Activated CD4-positive, alpha-beta T cell treated with anti-CD3 and anti-CD28 coated beads, Interleukin-2, amount 10 ng/mL, durations not matched to agents 24 days and 14 days (primary cell): ENCODE measurements at regions of chr1 and their contacts with region 1.

Region 1: DNA sequence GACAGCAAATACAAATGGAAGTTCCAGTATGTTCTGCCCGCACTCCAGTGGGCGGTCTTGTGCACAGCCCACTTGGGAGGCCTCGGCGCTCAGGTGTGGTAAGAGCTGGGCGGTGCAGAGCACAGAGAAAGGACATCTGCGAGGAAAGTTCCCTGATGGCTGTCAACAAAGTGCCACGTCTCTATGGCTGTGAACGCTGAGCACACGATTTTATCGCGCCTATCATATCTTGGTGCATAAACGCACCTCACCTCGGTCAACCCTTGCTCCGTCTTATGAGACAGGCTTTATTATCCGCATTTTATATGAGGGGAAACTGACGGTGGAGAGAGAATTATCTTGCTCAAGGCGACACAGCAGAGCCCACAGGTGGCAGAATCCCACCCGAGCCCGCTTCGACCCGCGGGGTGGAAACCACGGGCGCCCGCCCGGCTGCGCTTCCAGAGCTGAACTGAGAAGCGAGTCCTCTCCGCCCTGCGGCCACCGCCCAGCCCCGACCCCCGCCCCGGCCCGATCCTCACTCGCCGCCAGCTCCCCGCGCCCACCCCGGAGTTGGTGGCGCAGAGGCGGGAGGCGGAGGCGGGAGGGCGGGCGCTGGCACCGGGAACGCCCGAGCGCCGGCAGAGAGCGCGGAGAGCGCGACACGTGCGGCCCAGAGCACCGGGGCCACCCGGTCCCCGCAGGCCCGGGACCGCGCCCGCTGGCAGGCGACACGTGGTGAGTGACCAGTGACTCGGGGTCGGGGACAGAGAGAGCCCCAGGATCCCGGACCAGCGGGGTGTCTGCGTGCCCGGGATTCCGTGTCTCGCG is at the start of gene IL12RB2:
- DNase-seq: peak; percentile 93
- H3K4me3 Mint-ChIP-seq: peak within 1 kb of the TSS; percentile 97
- H3K27ac Mint-ChIP-seq: peak within 1 kb of the TSS; percentile 100
- H3K4me1 Mint-ChIP-seq: peaks cover 64% of the 10 kb centered on the region
- H3K27me3 Mint-ChIP-seq: no peaks in the 10 kb centered on the region
- total RNA-seq, gene IL12RB2: 138 and 146 TPM in 2 replicates

Region 2: GRCh38 chr1:65756616-65757015 is 1550.8 kb before region 1 on chr1:
- intact Hi-C with region 1: no loop called
- DNase-seq: no peak
- H3K4me3 Mint-ChIP-seq: no peak overlapping the region
- H3K27ac Mint-ChIP-seq: no peak overlapping the region
- H3K4me1 Mint-ChIP-seq: no peaks in the 10 kb centered on the region
- H3K27me3 Mint-ChIP-seq: peaks cover 19% of the 10 kb centered on the region

Region 3: DNA sequence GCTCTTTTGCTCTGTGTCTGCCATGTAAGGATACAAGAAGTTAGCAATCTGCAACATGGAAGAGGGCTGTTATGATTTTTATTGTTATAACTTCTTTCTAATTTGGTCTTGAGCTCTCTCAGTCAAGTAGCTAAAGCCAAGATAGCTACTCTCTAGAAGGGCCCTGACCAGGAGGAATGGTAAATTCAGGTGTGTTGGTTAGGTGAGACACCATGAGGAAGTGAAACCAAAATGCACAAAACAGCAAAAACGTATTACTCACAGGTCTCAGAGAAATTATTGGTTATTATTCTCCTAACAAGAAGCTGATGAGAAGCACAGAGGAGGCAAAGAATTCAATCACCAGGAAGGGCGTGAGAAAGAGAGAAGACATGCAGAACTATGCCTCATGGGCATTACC is 454.6 kb before region 1 on chr1:
- intact Hi-C with region 1: no loop called
- DNase-seq: no peak
- H3K4me3 Mint-ChIP-seq: no peak overlapping the region
- H3K27ac Mint-ChIP-seq: no peak overlapping the region
- H3K4me1 Mint-ChIP-seq: no peaks in the 10 kb centered on the region
- H3K27me3 Mint-ChIP-seq: no peaks in the 10 kb centered on the region

Region 4: GRCh38 chr1:67194209-67194863 is 113.1 kb before region 1 on chr1:
- intact Hi-C with region 1: loop called (anchors 2 kb)
- DNase-seq: peak; percentile 66
- H3K4me3 Mint-ChIP-seq: no peak overlapping the region
- H3K27ac Mint-ChIP-seq: peak overlapping the region; percentile 86
- H3K4me1 Mint-ChIP-seq: peaks cover 8% of the 10 kb centered on the region
- H3K27me3 Mint-ChIP-seq: no peaks in the 10 kb centered on the region

Region 5: DNA sequence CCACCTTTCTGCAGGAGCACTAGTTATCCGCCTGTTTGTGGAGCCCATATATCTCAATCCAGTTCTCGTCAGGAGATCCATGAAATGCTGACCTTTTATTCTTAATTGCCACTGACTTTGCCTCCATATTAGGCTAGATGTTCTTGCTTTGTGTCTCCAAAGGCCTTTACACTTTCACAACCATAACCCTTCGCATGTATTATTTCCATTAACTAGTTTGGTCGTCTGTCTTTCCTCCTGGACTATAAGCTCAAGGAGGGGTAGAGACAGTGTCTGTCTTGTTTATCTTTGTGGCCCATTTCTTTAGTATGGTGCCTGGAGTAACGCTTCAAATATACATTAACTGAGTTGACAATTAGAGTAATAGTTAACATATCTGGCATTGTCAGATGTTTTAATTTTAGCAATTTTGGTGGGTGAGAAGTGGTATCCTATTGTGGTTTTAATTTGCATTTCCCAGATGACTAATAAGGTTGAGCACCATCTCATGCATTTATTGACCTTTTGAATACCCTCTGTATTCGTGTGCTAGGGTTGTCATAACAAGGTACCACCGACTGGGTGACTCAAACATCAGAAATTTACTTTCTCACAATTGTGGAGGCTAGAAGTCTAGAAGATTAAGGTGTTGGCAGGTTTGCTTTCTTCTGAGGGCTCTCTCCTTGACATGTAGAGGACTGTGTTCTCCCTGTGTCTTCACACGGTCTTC is 21.5 kb before region 1 on chr1:
- intact Hi-C with region 1: loop called (anchors 1 kb)
- DNase-seq: no peak
- H3K4me3 Mint-ChIP-seq: peak overlapping the region; percentile 4
- H3K27ac Mint-ChIP-seq: peak overlapping the region; percentile 80
- H3K4me1 Mint-ChIP-seq: peaks cover 33% of the 10 kb centered on the region
- H3K27me3 Mint-ChIP-seq: no peaks in the 10 kb centered on the region

Region 6: DNA sequence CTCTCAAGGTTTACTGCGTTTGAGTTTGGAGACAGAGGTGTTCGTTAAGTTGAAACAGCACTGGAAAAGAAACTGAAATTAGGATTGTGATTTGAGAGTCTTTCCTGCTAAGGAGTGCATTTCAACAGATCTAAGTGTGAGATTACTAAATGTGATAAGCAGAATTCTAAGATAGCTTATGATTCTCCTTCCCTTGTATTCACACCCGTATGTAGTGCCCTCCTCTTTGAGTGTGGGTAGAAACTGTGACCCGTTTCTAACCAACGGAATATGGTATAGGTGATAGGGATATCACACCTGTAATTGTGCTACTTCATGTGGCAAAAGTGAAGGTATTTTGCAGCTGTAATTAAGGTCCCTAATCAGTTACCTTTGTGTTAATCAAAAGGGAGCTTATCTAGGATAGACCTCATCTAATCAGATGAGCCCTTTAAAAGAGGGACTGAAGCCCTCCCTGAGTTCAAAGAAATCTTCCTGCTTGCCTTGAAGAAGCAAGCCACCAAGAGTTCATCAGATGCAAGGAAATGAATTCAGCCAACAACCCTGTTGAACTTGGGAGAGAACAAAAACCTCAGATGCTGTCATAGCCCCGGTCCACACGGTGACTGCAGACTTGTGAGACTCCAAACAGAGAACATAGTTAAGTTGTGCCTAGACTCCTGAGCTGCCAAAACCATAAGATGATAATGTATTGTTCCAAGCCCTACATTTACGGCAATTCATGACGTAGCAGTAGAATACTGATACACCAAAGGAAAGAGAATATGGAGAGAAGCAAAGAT is 12.4 kb before region 1 on chr1:
- intact Hi-C with region 1: loop called (anchors 1 kb)
- DNase-seq: peak; percentile 82
- H3K4me3 Mint-ChIP-seq: peak overlapping the region; percentile 66
- H3K27ac Mint-ChIP-seq: peak overlapping the region; percentile 87
- H3K4me1 Mint-ChIP-seq: peaks cover 50% of the 10 kb centered on the region
- H3K27me3 Mint-ChIP-seq: no peaks in the 10 kb centered on the region